MCF 10A (cell line): ENCODE measurements at regions of chr5 and their contacts with region 1.

Region 1: DNA sequence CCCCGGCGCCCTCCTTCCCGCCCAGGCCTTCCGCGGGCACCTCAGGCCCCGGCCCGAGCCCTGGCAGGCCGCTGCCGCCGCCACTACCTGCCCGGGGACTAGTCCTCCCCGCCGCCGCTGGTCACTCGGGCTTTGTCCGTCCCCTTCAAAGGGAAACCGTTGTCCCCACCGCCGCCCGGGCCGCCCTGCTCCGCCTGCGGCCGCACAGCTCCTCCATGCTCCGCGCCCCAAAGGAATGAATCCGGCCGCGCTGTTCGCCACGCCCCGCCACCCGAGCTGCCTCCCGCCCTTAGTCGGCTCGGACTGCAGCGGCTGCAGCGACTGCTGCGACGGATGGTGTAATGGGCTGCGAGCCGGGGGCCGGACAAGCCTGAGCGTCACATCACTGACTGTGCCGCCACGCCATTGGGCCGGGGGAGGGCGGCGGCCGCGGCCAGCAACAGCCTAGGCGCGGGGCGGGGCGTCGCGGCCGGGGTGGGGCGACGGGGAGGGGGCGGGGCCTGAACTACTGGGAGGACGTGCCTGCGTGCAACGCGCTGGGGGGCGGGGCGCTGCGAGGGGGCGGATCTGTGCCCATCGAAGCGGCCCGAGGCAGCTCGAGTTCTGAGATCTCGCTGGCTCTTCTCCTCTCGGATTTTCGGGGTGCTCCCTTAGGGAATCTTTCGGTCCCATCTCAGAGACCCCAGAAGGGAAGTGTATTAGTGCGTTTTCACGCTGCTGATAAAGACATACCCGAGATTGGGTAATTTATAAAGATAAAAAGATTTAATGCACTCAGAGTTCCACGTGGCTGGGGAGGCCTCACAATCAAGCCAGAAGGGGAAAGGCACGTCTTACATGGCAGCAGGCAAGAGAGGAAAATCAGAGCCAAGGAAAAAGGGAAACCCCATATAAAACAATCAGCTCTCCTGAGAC is at the start of gene FEM1C:
- DNase-seq: peak; percentile 96
- H3K4me3 Mint-ChIP-seq: peak within 1 kb of the TSS; percentile 85
- H3K27ac Mint-ChIP-seq: peak within 1 kb of the TSS; percentile 97
- H3K4me1 Mint-ChIP-seq: peaks cover 7% of the 10 kb centered on the region
- H3K27me3 Mint-ChIP-seq: no peaks in the 10 kb centered on the region
- CTCF ChIP-seq: no peak
- total RNA-seq, gene FEM1C: 10.3 and 12.2 TPM in 2 replicates

Region 2: DNA sequence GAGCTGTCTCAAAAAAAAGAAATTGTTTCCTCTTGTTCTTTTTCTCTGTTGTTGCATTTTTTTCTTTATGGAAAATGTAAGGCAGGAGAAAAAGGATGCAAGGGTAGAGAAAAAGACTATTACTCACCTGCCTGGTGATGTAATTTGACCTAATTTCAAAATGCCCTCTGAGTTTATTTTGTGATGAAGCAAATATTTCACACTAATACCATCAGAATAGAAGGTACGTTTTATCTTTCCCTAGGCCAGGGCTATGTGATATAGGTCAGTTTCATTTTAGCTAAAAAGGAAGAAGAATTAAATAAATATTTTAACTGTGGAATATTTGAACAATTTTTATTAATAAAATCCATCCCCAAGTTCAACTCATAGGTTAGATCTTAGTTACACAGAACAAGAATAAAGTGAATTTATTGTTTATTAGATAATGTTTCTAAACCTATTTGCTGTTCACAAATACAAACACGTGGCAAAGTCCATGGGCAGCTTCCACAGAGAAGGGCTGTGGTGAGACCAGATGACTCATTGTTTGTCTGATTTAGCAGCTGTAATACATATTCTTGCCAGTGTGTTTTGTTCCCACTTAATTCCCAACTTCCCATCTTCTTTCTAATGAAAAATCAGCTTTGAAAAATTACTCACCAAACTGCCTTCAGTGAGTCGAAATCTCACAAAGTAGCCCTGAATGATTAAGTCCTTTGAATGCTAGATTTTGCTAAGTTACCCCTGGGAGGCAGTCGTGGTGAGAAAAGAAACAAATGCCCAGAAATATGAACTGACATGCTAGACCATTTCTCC is 195.5 kb before region 1 on chr5:
- CTCF ChIA-PET with region 1: no interaction called
- POLR2A ChIA-PET with region 1: interaction called, 12 read pairs
- intact Hi-C with region 1: no loop called
- DNase-seq: peak; percentile 81
- H3K4me3 Mint-ChIP-seq: peak overlapping the region; percentile 25
- H3K27ac Mint-ChIP-seq: peak overlapping the region; percentile 84
- H3K4me1 Mint-ChIP-seq: peaks cover 25% of the 10 kb centered on the region
- H3K27me3 Mint-ChIP-seq: no peaks in the 10 kb centered on the region
- CTCF ChIP-seq: no peak

Region 3: GRCh38 chr5:115415143-115415491 is 129.6 kb before region 1 on chr5:
- CTCF ChIA-PET with region 1: no interaction called
- POLR2A ChIA-PET with region 1: interaction called, 15 read pairs
- intact Hi-C with region 1: loop called (anchors 1 kb)
- DNase-seq: peak; percentile 88
- H3K4me3 Mint-ChIP-seq: no peak overlapping the region
- H3K27ac Mint-ChIP-seq: peak overlapping the region; percentile 92
- H3K4me1 Mint-ChIP-seq: peaks cover 43% of the 10 kb centered on the region
- H3K27me3 Mint-ChIP-seq: no peaks in the 10 kb centered on the region
- CTCF ChIP-seq: no peak

Region 4: GRCh38 chr5:115472271-115473025 is 72.2 kb before region 1 on chr5:
- CTCF ChIA-PET with region 1: interaction called, 3 read pairs
- POLR2A ChIA-PET with region 1: interaction called, 17 read pairs
- intact Hi-C with region 1: no loop called
- DNase-seq: no peak
- H3K4me3 Mint-ChIP-seq: no peak overlapping the region
- H3K27ac Mint-ChIP-seq: peak overlapping the region; percentile 43
- H3K4me1 Mint-ChIP-seq: peaks cover 27% of the 10 kb centered on the region
- H3K27me3 Mint-ChIP-seq: no peaks in the 10 kb centered on the region
- CTCF ChIP-seq: no peak

Region 5: GRCh38 chr5:115530426-115530825 is 14.3 kb before region 1 on chr5:
- CTCF ChIA-PET with region 1: interaction called, 4 read pairs
- POLR2A ChIA-PET with region 1: interaction called, 32 read pairs
- intact Hi-C with region 1: no loop called
- DNase-seq: no peak
- H3K4me3 Mint-ChIP-seq: peak overlapping the region; percentile 29
- H3K27ac Mint-ChIP-seq: no peak overlapping the region
- H3K4me1 Mint-ChIP-seq: peaks cover 32% of the 10 kb centered on the region
- H3K27me3 Mint-ChIP-seq: no peaks in the 10 kb centered on the region
- CTCF ChIP-seq: no peak

Region 6: GRCh38 chr5:115571441-115571878 is 26.8 kb after region 1 on chr5:
- CTCF ChIA-PET with region 1: interaction called, 15 read pairs
- POLR2A ChIA-PET with region 1: interaction called, 23 read pairs
- intact Hi-C with region 1: loop called (anchors 2 kb)
- DNase-seq: no peak
- H3K4me3 Mint-ChIP-seq: no peak overlapping the region
- H3K27ac Mint-ChIP-seq: no peak overlapping the region
- H3K4me1 Mint-ChIP-seq: peaks cover 16% of the 10 kb centered on the region
- H3K27me3 Mint-ChIP-seq: no peaks in the 10 kb centered on the region
- CTCF ChIP-seq: no peak

Region 7: GRCh38 chr5:115586601-115587048 is 41.9 kb after region 1 on chr5:
- CTCF ChIA-PET with region 1: interaction called, 4 read pairs
- POLR2A ChIA-PET with region 1: no interaction called
- intact Hi-C with region 1: loop called (anchors 5 kb)
- DNase-seq: peak; percentile 44
- H3K4me3 Mint-ChIP-seq: no peak overlapping the region
- H3K27ac Mint-ChIP-seq: no peak overlapping the region
- H3K4me1 Mint-ChIP-seq: no peaks in the 10 kb centered on the region
- H3K27me3 Mint-ChIP-seq: no peaks in the 10 kb centered on the region
- CTCF ChIP-seq: peak; percentile 45